ENCODE measurements at regions of chr2 and their contacts with region 1.

Region 1: DNA sequence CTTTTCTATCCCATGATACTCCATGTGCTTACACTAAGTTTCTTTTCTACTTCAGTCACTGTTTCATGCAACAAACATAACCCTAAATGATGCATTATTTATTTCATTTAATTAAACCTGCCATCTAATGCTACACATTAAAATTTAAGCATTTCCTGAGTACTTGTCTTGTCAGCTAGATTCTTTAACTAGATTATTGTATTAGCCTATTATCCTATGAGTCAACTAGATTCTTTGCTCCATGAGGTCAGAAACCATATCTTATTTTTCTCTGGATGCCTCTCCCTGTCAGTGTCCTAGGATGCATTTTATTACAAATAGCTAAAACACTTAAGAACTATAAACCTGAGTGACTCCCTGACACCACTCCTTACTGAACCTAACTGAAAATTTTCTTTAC is 652.4 kb downstream of the SLC4A3 start:
- DNase-seq: no peak
- H3K4me3 ChIP-seq: no peak overlapping the region
- H3K27ac ChIP-seq: no peak overlapping the region
- H3K4me1 ChIP-seq: no peaks in the 10 kb centered on the region
- H3K27me3 ChIP-seq: no peaks in the 10 kb centered on the region
- CTCF ChIP-seq: no peak
- POLR2A ChIP-seq: no peak

Region 2: DNA sequence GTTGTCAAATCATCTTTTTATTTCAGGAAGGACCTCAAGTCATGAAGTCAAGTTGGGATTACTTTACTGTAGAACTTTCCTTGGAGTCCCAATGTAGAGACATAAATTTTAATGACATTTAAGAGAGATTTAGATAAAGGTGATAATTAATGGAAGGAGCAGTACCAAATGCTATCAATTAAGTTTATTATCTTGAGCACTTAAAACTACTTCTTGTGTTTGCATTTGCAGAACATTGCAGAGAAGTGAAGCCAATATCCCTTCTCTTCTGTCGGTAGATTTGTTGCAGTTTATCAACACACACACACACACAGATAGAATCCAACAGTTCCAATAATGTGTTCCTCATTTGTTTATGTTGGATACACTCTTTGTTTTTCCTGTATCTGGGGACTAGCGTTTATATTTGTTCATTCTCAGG is 721.6 kb after region 1 on chr2:
- intact Hi-C with region 1: loop called (anchors 5 kb)
- DNase-seq: no peak
- H3K4me3 ChIP-seq: no peak overlapping the region
- H3K27ac ChIP-seq: no peak overlapping the region
- H3K4me1 ChIP-seq: no peaks in the 10 kb centered on the region
- H3K27me3 ChIP-seq: no peaks in the 10 kb centered on the region
- CTCF ChIP-seq: no peak
- POLR2A ChIP-seq: no peak